Activated B cell treated with CpG ODN at 0.5 μM for 24 hours (primary cell): ENCODE measurements at regions of chr17 and their contacts with region 1.

Region 1: DNA sequence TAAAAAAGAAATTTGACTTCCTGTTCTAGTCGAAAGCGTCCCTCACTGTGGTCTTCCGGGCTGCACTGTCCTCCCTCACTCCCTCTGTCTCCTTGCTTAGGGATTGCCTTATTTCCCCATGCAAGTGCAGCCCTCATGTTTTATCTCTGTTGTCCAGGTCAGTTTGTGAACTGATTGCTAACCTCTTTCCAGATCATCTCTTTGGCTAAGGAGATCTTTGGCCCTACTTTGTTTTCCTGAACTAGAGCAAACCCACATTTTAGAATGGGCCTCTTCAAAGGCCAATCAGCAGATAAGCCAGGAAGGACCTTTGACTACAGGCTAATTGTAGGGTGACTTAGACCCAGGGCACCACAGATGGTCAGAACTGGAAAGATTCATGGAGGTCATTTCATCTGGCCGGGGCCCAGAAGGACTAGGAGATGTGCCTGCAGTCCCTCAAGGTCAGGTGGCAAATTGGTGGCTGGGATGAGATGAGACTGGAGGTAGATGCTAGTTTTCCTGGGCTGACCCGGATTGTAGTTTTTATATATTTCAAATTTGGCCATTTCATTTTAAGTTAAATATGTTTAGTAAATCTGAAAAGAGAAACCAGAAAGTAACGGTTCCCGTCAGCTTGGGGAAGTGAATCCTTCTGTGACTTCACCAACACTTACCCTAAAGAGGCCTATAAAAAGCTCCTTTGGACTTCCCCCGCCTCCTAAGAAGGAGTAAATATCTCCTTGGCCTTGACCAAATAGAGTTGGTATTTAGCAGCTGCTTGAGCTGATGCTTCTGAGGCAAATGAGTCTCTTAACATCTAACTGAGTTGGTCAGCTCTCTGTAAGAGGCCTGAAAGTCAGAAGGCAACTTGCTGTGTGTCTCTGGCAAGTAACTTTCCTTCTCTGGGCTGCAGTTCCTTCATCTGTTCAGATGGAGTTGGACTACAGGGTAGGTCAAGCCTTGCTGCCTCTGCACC is 6.2 kb upstream of the SLC25A19 start:
- DNase-seq: peak; percentile 46
- ATAC-seq: peak; percentile 64
- H3K4me3 Mint-ChIP-seq: peak overlapping the region; percentile 76
- H3K27ac Mint-ChIP-seq: peak overlapping the region; percentile 100
- H3K4me1 Mint-ChIP-seq: peaks cover 77% of the 10 kb centered on the region
- H3K27me3 Mint-ChIP-seq: no peaks in the 10 kb centered on the region
- CTCF ChIP-seq: no peak

Region 2: GRCh38 chr17:74864866-74865395 is 430.5 kb before region 1 on chr17:
- CTCF ChIA-PET with region 1: no interaction called
- POLR2A ChIA-PET with region 1: no interaction called
- intact Hi-C with region 1: no loop called
- DNase-seq: peak; percentile 69
- ATAC-seq: peak; percentile 76
- H3K4me3 Mint-ChIP-seq: no peak overlapping the region
- H3K27ac Mint-ChIP-seq: no peak overlapping the region
- H3K4me1 Mint-ChIP-seq: peaks cover 25% of the 10 kb centered on the region
- H3K27me3 Mint-ChIP-seq: peaks cover 11% of the 10 kb centered on the region
- CTCF ChIP-seq: no peak

Region 3: DNA sequence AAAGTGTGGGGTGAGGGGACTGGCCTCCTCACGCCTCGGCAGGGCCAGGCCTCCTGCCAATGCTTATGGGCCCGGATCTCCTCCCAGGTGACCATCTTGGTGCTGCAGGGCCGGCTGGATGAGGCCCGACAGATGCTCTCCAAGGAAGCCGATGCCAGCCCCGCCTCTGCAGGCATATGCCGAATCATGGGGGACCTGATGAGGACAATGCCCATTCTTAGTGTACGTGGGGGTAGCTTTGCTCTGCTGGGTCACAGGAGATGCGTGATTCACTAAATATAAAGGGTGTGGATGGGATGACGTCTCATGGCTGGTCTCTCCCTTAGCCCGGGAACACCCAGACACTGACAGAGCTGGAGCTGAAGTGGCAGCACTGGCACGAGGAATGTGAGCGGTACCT is 70.5 kb before region 1 on chr17:
- CTCF ChIA-PET with region 1: no interaction called
- POLR2A ChIA-PET with region 1: no interaction called
- intact Hi-C with region 1: no loop called
- DNase-seq: no peak
- ATAC-seq: no peak
- H3K4me3 Mint-ChIP-seq: no peak overlapping the region
- H3K27ac Mint-ChIP-seq: no peak overlapping the region
- H3K4me1 Mint-ChIP-seq: no peaks in the 10 kb centered on the region
- H3K27me3 Mint-ChIP-seq: no peaks in the 10 kb centered on the region
- CTCF ChIP-seq: no peak

Region 4: GRCh38 chr17:75338335-75338734 is 42.9 kb after region 1 on chr17:
- CTCF ChIA-PET with region 1: no interaction called
- POLR2A ChIA-PET with region 1: interaction called, 154 read pairs
- intact Hi-C with region 1: no loop called
- DNase-seq: no peak
- ATAC-seq: peak; percentile 19
- H3K4me3 Mint-ChIP-seq: peak overlapping the region; percentile 62
- H3K27ac Mint-ChIP-seq: peak overlapping the region; percentile 84
- H3K4me1 Mint-ChIP-seq: peaks cover 89% of the 10 kb centered on the region
- H3K27me3 Mint-ChIP-seq: no peaks in the 10 kb centered on the region
- CTCF ChIP-seq: no peak

Region 5: GRCh38 chr17:75393523-75394331 is 98.2 kb after region 1 on chr17:
- CTCF ChIA-PET with region 1: no interaction called
- POLR2A ChIA-PET with region 1: interaction called, 32 read pairs
- intact Hi-C with region 1: no loop called
- DNase-seq: peak; percentile 84
- ATAC-seq: peak; percentile 96
- H3K4me3 Mint-ChIP-seq: peak overlapping the region; percentile 92
- H3K27ac Mint-ChIP-seq: peak overlapping the region; percentile 88
- H3K4me1 Mint-ChIP-seq: peaks cover 84% of the 10 kb centered on the region
- H3K27me3 Mint-ChIP-seq: no peaks in the 10 kb centered on the region
- CTCF ChIP-seq: no peak

Region 6: DNA sequence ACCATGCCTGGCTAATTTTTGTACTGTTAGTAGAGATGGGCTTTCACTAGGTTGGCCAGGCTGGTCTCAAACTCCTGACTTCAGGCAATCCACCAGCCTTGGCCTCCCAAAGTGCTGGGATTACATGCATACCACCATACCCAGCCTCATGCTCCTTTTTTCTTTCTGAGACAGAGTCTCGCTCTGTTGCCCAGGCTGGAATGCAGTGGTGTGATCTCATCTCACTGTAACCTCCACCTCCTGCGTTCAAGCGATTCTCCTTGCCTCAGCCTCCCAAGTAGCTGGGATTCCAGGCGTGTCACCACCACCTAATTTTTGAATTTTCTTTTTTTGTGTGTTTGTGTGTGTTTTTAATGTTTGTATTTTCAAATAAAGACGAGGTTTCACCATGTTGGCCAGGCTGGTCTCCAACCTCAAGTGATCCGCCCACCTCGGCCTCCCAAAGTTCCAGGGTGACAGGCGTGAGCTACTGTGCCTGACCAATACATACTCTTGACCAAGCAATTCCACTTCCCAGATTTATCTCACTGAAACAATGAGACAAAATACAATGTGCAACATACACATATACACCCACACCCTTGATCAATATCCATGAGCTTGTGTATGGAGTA is 105.0 kb after region 1 on chr17:
- CTCF ChIA-PET with region 1: interaction called, 7 read pairs
- POLR2A ChIA-PET with region 1: interaction called, 136 read pairs
- intact Hi-C with region 1: loop called (anchors 1 kb)
- DNase-seq: no peak
- ATAC-seq: no peak
- H3K4me3 Mint-ChIP-seq: peak overlapping the region; percentile 19
- H3K27ac Mint-ChIP-seq: peak overlapping the region; percentile 30
- H3K4me1 Mint-ChIP-seq: peaks cover 72% of the 10 kb centered on the region
- H3K27me3 Mint-ChIP-seq: no peaks in the 10 kb centered on the region
- CTCF ChIP-seq: no peak

Region 7: DNA sequence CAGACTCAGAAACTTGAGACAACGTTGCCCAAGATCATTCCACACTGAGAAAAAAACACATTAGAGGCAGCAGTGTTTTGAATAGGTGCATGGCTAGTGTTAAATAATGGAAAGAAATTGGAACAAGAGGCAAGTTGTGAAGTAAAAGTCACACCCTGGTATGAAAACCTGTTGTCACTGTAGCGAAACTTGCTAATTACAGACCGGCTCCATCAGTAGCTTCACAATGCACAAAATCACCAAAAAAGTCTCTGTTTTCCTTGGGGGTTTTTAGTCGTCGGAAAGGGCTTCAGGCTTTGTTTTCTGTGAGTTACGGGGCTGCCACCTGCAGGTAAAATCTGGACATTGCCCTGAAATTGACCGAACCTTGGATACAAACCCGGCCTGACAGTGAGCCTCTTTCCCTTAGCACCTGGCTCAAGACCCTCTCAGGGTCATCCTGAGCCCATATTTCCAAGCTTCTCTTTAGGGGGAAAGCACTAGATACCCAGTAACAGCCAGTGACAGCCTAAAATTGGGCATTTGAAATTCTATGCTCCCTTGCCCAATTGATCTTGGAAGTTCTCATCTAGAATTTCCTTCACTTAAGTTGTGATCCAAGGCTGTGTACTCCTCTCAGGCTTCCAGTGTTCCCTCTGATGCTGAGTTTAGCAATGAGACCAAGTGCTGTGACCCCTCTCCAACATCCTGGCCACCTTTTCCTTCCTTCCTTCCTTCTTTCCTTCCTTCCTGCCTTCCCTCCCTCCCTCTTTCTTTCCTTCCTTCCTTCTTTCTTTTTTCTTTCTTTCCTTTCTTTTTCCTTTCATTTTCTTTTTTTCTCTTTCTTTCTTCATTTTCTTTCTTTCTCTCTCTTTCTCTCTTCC is 117.2 kb after region 1 on chr17:
- CTCF ChIA-PET with region 1: interaction called, 40 read pairs
- POLR2A ChIA-PET with region 1: interaction called, 136 read pairs
- intact Hi-C with region 1: no loop called
- DNase-seq: peak; percentile 63
- ATAC-seq: peak; percentile 94
- H3K4me3 Mint-ChIP-seq: peak overlapping the region; percentile 53
- H3K27ac Mint-ChIP-seq: peak overlapping the region; percentile 63
- H3K4me1 Mint-ChIP-seq: peaks cover 12% of the 10 kb centered on the region
- H3K27me3 Mint-ChIP-seq: no peaks in the 10 kb centered on the region
- CTCF ChIP-seq: peak; percentile 9